ENCODE measurements at regions of chr6 and their contacts with region 1.

Region 1: DNA sequence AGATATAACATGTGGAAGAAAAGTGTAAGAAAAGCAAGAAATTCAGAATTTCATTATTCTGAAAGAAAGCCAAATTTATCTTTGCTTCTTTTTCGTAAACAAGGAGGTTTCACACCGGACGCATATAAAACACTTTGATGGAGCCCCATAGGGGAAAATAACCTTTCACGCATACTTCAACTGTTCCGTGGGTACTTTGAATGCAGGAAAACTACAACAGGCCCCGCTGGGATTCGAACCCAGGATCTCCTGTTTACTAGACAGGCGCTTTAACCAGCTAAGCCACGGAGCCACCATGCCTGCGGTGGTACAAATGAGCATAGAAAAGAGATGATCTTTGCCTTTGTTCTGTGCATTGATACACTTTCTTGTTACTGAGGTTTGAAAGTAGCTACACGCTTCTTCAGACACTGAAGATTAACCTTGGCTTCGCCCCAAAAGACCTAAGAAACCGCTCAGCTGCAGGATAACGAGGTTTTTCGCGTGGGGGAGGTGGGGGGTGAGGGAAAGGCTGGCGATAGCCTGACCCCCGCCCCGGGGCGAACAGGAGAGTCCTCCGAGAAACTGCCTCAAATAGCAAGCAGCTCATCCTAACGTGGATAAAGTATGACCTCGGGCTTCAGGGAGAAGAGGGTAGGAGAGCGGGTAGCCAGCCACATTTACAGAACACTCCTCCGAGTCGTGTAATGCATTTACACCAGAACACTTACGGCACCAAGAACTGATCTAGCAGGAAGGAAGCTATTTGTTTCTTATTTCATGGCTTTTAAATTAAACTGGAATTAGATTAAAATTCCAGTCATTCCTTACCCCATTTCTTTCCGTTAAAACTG is 5.3 kb upstream of the HMGN4 start:
- DNase-seq: peak; percentile 79 to 96 (median 90)
- ATAC-seq: peak; percentile 36
- H3K4me3 ChIP-seq: peak overlapping the region; percentile 72
- H3K4me3 Mint-ChIP-seq: peak overlapping the region; percentile 98
- H3K27ac ChIP-seq: peak overlapping the region; percentile 20 to 59
- H3K27ac Mint-ChIP-seq: peak overlapping the region; percentile 97
- H3K4me1 ChIP-seq: peaks cover 28% of the 10 kb centered on the region
- H3K4me1 Mint-ChIP-seq: peaks cover 50% of the 10 kb centered on the region
- H3K27me3 ChIP-seq: no peaks in the 10 kb centered on the region
- H3K27me3 Mint-ChIP-seq: peaks cover 16% of the 10 kb centered on the region
- CTCF ChIP-seq: no peak

Region 2: DNA sequence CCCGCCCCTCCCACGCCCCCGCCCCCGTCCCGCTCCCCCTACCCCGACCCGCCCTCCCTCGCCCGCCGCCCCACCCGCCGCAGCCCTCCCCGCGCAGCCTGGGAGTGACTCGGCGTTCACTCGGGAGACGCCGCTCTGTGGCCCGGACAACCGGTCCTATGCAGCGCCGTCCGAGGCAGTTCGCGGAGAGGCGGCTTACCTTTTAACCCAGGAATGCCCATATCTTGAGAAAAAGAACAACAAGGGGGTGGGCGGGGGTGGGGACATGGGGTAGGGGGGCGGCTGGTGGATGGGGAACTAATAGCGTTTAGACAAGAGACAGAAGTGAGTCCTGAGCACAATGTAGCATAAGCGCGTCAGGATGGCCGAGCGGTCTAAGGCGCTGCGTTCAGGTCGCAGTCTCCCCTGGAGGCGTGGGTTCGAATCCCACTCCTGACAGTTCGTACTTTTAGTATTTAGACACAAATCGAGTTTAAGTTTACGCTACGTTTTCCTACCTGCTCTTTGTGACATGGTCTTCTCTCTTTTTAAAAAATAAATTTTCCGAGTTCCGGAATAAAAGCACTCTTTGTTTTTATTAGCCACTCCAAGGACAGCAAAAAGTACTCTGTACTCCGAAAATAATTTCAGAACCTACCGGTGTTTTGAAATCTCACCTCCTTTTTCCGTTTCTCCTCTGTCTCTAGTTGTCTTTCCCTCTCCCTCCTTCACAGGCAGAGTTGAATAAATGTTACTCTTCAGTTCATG is 11.9 kb before region 1 on chr6:
- CTCF ChIA-PET with region 1: interaction called, 15 read pairs
- POLR2A ChIA-PET with region 1: interaction called, 80 read pairs
- intact Hi-C with region 1: loop called (anchors 1 kb)
- DNase-seq: peak; percentile 77 to 93 (median 84)
- ATAC-seq: peak; percentile 81
- H3K4me3 ChIP-seq: peak overlapping the region; percentile 65
- H3K4me3 Mint-ChIP-seq: peak overlapping the region; percentile 89
- H3K27ac ChIP-seq: peak overlapping the region; percentile 50 to 61
- H3K27ac Mint-ChIP-seq: peak overlapping the region; percentile 99
- H3K4me1 ChIP-seq: peaks cover 10% of the 10 kb centered on the region
- H3K4me1 Mint-ChIP-seq: peaks cover 30% of the 10 kb centered on the region
- H3K27me3 ChIP-seq: no peaks in the 10 kb centered on the region
- H3K27me3 Mint-ChIP-seq: peaks cover 9% of the 10 kb centered on the region
- CTCF ChIP-seq: no peak

Region 3: GRCh38 chr6:26568601-26569432 is 35.9 kb after region 1 on chr6:
- CTCF ChIA-PET with region 1: interaction called, 8 read pairs
- POLR2A ChIA-PET with region 1: interaction called, 48 read pairs
- intact Hi-C with region 1: loop called in 1 of 2 experiments (anchors 1 kb)
- DNase-seq: peak; percentile 96 to 100 (median 98)
- ATAC-seq: peak; percentile 74
- H3K4me3 ChIP-seq: peak overlapping the region; percentile 55
- H3K4me3 Mint-ChIP-seq: peak overlapping the region; percentile 97
- H3K27ac ChIP-seq: peak overlapping the region; percentile 37 to 53
- H3K27ac Mint-ChIP-seq: peak overlapping the region; percentile 100
- H3K4me1 ChIP-seq: peaks cover 21% of the 10 kb centered on the region
- H3K4me1 Mint-ChIP-seq: peaks cover 29% of the 10 kb centered on the region
- H3K27me3 ChIP-seq: no peaks in the 10 kb centered on the region
- H3K27me3 Mint-ChIP-seq: peaks cover 16% of the 10 kb centered on the region
- CTCF ChIP-seq: peak; percentile 58

Measured in CD4-positive, alpha-beta T cell (primary cell).